AG04449 (cell line): ENCODE measurements at regions of chr3 and their contacts with region 1.

Region 1: DNA sequence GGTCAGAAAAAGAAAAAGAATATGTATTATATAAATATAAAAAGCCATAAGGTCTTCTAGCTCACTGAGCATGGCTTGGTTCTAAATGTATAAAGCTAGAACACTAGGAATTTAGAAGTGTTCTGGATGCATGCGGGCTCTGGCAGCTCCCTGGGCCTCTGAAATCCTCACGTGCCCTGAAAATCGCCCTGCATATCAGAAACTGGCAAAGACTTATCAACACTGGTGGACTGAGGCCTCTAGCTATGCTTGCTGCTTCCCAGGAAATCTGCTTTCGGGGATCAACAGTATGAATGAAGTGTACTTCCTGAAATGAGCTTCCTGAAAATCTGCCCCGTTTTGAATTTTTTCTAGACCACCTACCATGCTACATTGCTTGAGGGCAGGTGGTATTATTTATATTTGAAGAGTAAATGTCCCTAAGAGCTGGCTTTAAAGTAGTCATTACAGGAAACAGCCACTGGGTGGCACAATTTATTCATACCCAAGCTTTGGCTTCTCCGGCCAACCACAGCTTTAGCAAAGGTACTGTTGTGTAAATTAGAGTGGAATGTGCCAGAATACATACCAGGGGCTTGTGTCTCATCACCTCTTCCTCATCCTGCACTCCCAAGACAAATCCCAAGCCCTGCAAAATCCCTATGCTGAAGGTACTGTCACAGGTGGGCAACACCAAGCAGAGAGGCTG is 17.7 kb downstream of the CRTAP start:
- DNase-seq: no peak
- H3K4me3 ChIP-seq: no peak overlapping the region
- CTCF ChIP-seq: peak; percentile 36

Region 2: GRCh38 chr3:32947789-32948238 is 183.7 kb before region 1 on chr3:
- CTCF ChIA-PET with region 1: interaction called, 16 read pairs
- POLR2A ChIA-PET with region 1: no interaction called
- DNase-seq: peak; percentile 7
- H3K4me3 ChIP-seq: no peak overlapping the region
- CTCF ChIP-seq: peak; percentile 78

Region 3: DNA sequence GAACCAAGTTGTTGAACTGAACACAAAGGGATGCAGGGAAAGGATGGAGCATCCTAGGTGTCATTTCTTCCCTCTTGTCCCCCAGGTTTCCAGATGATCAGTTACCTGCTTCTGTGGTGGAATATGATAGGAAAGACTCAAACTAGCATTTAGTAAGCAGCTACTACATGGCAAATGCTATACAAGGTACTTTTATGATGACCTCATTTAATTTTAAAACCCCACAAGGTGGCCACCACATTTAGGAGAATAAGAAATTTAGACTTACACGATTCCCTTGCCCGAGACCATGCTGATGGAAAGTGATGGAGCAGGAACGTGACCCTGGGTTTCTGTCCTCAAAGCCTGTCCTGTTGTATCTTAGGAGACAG is 139.2 kb before region 1 on chr3:
- CTCF ChIA-PET with region 1: no interaction called
- POLR2A ChIA-PET with region 1: no interaction called
- DNase-seq: no peak
- H3K4me3 ChIP-seq: no peak overlapping the region
- CTCF ChIP-seq: no peak

Region 4: DNA sequence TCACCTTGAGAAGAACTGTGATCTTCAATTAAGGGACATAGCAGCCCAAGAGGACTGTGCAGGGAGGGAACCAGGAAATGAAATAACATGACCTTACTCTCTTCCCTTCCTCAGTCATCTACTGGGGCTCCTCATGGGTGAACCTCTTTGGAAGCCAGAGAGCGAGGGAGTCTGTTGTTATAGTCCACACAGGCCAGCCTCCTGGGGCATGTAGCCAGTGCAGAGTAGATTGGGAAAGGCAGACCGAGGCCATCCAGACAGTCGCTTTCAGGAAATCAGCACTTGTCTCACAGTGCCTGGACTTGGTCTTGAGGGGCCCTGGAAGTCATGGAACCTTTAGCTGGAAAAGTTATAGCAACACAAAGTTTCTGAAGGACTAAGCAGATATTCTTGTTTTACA is 11.6 kb before region 1 on chr3:
- CTCF ChIA-PET with region 1: interaction called, 34 read pairs
- POLR2A ChIA-PET with region 1: no interaction called
- DNase-seq: no peak
- H3K4me3 ChIP-seq: no peak overlapping the region
- CTCF ChIP-seq: no peak

Region 5: GRCh38 chr3:33360136-33360825 is 228.8 kb after region 1 on chr3:
- CTCF ChIA-PET with region 1: interaction called, 25 read pairs
- POLR2A ChIA-PET with region 1: no interaction called
- DNase-seq: peak; percentile 29
- H3K4me3 ChIP-seq: no peak overlapping the region
- CTCF ChIP-seq: no peak

Region 6: DNA sequence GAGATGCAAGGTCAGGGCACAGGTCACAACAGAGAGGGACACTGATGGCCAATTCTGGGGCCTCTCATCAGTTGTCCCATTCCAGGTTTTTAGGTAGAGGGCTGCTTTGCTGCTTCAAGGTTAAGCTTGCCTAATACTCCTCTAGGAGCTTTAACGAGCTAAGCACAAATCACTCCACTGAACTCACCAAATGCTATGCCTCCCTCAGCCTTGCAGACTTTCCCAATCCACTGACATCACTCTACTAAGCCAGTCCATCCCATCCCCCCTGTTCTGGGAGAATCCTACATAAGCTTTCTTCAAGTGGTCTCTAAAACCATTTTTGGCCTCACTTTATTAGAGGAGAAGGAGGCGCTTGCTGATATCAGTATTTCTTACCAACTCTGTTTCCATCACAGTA is 642.2 kb after region 1 on chr3:
- CTCF ChIA-PET with region 1: interaction called, 22 read pairs
- POLR2A ChIA-PET with region 1: no interaction called
- DNase-seq: peak; percentile 9
- H3K4me3 ChIP-seq: no peak overlapping the region
- CTCF ChIP-seq: no peak